Activated CD4-positive, alpha-beta memory T cell treated with anti-CD3 and anti-CD28 coated beads, Interleukin-2, amount 10 ng/mL, durations not matched to agents 7 days and 5 days (primary cell): ENCODE measurements at regions of chr1 and their contacts with region 1.

Region 1: DNA sequence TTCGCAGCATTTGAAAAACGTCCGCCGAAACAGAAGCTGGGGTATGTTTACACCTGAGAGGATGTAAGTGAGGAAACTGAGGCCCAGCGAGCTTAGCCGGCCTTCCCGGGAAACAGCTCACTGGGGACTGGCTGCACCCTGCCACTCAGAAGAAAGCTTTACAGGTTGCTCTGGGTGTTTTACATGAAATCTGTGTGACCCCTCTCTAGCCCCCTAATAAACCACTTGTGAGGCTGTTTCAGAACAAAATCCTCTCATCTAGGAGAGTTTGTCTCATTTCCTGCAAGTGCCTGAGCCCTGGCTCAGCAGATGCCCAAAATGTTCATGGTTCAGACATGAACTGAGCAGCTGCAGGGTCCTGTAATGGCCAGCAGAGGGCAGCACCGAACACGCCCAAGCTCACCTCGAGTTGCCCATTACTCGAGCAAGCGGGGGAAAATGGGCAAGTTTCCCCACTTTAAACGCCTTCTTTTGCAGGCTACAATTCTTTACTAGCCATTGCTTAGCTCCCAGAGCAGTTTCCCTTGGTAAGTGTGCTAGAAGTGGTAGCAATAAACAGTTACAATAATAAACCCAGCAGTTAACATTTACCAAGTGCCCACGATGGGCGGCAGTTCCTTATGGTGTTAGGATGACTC is 76.4 kb downstream of the FHAD1 start:
- DNase-seq: peak; percentile 79
- H3K4me3 Mint-ChIP-seq: no peak overlapping the region
- H3K27ac Mint-ChIP-seq: no peak overlapping the region
- H3K4me1 Mint-ChIP-seq: peaks cover 6% of the 10 kb centered on the region
- H3K27me3 Mint-ChIP-seq: peaks cover 16% of the 10 kb centered on the region

Region 2: DNA sequence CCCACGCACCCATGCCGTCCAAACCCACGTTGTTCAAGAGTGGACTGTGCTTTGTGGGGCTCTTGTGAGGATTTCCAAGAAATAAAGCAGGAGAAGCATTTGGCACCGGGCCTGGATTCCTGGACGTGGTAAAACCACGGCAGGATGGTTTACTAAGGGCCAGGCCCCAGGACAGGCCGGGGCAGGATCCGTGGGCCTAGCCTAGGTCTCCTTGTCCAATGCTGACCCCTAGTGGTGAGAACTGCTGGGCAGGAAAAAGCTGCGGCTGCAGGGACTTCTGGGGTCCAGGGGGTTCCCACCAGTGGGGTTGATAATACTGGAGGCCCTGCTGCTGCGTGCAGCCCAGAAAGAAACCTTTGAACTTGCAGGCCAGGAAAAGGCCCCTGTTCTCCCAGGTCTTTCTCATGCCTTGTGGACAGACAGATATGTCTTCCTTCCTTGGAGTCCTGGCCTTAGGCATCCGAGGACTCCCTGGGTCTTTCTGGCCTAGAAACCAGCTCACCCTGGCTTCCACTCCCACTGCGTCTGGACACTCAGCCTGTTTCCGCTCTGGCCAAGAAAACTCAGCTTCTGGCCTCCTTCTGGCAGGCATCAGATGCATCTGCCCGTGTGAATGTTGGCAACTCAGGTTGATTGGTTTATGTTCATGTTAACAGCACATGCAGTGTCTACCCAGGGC is 276.8 kb before region 1 on chr1:
- CTCF ChIA-PET with region 1: no interaction called
- POLR2A ChIA-PET with region 1: no interaction called
- DNase-seq: peak; percentile 51
- H3K4me3 Mint-ChIP-seq: no peak overlapping the region
- H3K27ac Mint-ChIP-seq: no peak overlapping the region
- H3K4me1 Mint-ChIP-seq: no peaks in the 10 kb centered on the region
- H3K27me3 Mint-ChIP-seq: no peaks in the 10 kb centered on the region

Region 3: DNA sequence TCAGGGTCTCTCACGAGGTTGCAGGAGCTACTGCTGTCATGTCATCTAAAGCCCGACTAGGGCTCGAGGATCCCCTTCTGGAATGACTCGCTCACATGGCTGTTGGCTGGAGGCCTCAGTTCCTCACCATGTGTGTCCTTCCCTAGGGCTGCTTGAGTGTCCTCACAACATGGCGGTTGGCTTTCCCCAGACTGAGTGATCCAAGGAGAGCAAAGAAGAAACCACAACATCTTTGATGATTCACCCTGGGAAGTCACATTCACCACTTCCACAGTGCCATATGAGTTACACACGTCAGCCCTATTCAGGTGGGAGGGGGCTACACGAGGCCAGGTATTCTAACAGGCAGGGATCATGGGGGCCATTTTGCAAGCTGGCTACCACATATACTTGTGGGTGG is 11.6 kb before region 1 on chr1:
- CTCF ChIA-PET with region 1: interaction called, 12 read pairs
- POLR2A ChIA-PET with region 1: no interaction called
- DNase-seq: no peak
- H3K4me3 Mint-ChIP-seq: no peak overlapping the region
- H3K27ac Mint-ChIP-seq: no peak overlapping the region
- H3K4me1 Mint-ChIP-seq: no peaks in the 10 kb centered on the region
- H3K27me3 Mint-ChIP-seq: peaks cover 3% of the 10 kb centered on the region

Region 4: DNA sequence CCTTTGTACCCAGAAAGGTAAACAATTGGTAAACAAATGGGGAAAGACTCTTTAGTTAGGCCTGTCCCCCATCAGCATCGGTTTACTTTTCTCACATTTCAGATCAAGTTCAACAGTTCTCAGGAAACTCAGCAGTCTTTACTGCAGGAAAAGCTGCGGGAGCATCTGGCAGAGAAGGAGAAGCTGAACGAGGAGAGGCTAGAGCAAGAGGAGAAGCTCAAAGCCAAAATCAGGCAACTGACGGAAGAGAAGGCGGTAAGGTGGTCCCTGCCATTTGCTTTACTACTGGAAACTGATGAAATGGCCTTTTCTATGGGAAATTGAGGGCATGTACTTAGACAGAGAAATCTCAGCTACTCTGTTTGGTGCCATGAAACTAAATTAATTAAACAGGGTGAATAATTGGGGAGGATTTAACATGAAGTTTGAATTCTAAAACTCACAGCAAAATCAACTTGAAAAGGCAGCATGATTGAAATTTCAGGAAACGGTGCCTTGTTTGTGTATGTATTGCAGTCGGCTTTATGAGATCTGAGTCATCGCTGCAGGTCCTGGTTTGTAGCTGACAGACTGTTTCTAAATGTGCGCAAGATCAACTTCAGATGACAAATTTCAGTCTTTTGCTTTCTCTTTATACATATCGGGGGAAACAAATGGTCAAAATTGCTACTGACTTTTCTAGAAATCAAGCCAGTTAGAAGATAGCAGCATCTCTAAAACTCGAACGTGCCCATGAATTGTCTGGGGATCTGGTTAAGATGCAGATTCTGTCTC is 18.4 kb after region 1 on chr1:
- CTCF ChIA-PET with region 1: interaction called, 16 read pairs
- POLR2A ChIA-PET with region 1: no interaction called
- DNase-seq: peak; percentile 36
- H3K4me3 Mint-ChIP-seq: peak overlapping the region; percentile 25
- H3K27ac Mint-ChIP-seq: peak overlapping the region; percentile 83
- H3K4me1 Mint-ChIP-seq: peaks cover 71% of the 10 kb centered on the region
- H3K27me3 Mint-ChIP-seq: peaks cover 3% of the 10 kb centered on the region

Region 5: GRCh38 chr1:15384301-15384901 is 60.9 kb after region 1 on chr1:
- CTCF ChIA-PET with region 1: no interaction called
- POLR2A ChIA-PET with region 1: no interaction called
- DNase-seq: no peak
- H3K4me3 Mint-ChIP-seq: no peak overlapping the region
- H3K27ac Mint-ChIP-seq: no peak overlapping the region
- H3K4me1 Mint-ChIP-seq: peaks cover 5% of the 10 kb centered on the region
- H3K27me3 Mint-ChIP-seq: peaks cover 27% of the 10 kb centered on the region

Region 6: DNA sequence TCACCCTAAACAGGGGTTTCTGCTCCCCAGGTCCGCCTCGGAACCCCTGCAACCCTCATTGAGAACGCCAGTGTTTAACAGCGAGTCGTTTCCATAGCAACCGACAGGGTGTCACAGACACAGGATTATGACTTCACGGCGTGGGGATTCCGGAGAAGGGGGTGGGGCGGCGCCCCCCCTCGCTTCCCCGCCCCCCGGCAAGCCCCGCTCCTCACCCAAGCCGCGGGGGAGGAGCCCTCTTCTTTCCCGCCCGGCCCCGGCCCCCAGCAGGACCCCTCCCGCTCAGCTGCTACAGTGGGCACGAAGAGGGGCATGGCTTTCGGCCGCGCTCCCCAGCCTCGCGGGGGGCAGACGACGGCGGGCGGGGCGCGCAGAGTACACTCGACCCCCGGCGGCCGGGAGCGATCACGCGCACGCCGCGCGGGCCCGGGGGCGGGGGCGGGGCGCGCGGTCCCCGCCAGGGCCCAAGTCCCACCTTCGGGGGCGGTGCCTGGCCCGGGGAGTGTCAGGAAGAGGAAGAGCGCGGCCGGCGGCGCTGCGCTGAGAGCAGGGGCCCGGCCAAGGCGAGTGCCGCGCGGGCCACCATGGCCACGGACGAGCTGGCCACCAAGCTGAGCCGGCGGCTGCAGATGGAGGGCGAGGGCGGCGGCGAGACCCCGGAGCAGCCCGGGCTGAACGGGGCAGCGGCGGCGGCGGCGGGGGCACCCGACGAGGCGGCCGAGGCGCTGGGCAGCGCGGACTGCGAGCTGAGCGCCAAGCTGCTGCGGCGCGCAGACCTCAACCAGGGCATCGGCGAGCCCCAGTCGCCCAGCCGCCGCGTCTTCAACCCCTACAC is 86.1 kb after region 1 on chr1 and contains the start of gene EFHD2:
- CTCF ChIA-PET with region 1: interaction called, 15 read pairs
- POLR2A ChIA-PET with region 1: interaction called, 8 read pairs
- DNase-seq: peak; percentile 86
- H3K4me3 Mint-ChIP-seq: peak within 1 kb of the TSS; percentile 97
- H3K27ac Mint-ChIP-seq: peak within 1 kb of the TSS; percentile 89
- H3K4me1 Mint-ChIP-seq: peaks cover 51% of the 10 kb centered on the region
- H3K27me3 Mint-ChIP-seq: peaks cover 36% of the 10 kb centered on the region
- total RNA-seq, gene EFHD2: 97.7 to 99.7 TPM

Region 7: GRCh38 chr1:15417365-15417934 is 94.0 kb after region 1 on chr1:
- CTCF ChIA-PET with region 1: interaction called, 14 read pairs
- POLR2A ChIA-PET with region 1: interaction called, 8 read pairs
- DNase-seq: peak; percentile 61
- H3K4me3 Mint-ChIP-seq: peak overlapping the region; percentile 51
- H3K27ac Mint-ChIP-seq: peak overlapping the region; percentile 87
- H3K4me1 Mint-ChIP-seq: peaks cover 74% of the 10 kb centered on the region
- H3K27me3 Mint-ChIP-seq: no peaks in the 10 kb centered on the region

Region 8: GRCh38 chr1:15430787-15431570 is 107.5 kb after region 1 on chr1:
- CTCF ChIA-PET with region 1: interaction called, 124 read pairs
- POLR2A ChIA-PET with region 1: interaction called, 5 read pairs
- DNase-seq: peak; percentile 74
- H3K4me3 Mint-ChIP-seq: no peak overlapping the region
- H3K27ac Mint-ChIP-seq: no peak overlapping the region
- H3K4me1 Mint-ChIP-seq: peaks cover 8% of the 10 kb centered on the region
- H3K27me3 Mint-ChIP-seq: no peaks in the 10 kb centered on the region

Region 9: GRCh38 chr1:15475752-15476314 is 152.4 kb after region 1 on chr1 and contains the start of gene CELA2B:
- CTCF ChIA-PET with region 1: no interaction called
- POLR2A ChIA-PET with region 1: no interaction called
- DNase-seq: no peak
- H3K4me3 Mint-ChIP-seq: no peak within 1 kb of the TSS
- H3K27ac Mint-ChIP-seq: no peak within 1 kb of the TSS
- H3K4me1 Mint-ChIP-seq: no peaks in the 10 kb centered on the region
- H3K27me3 Mint-ChIP-seq: peaks cover 1% of the 10 kb centered on the region
- total RNA-seq, gene CELA2B: not detected